ENCODE measurements at regions of chr7 and their contacts with region 1.

Region 1: DNA sequence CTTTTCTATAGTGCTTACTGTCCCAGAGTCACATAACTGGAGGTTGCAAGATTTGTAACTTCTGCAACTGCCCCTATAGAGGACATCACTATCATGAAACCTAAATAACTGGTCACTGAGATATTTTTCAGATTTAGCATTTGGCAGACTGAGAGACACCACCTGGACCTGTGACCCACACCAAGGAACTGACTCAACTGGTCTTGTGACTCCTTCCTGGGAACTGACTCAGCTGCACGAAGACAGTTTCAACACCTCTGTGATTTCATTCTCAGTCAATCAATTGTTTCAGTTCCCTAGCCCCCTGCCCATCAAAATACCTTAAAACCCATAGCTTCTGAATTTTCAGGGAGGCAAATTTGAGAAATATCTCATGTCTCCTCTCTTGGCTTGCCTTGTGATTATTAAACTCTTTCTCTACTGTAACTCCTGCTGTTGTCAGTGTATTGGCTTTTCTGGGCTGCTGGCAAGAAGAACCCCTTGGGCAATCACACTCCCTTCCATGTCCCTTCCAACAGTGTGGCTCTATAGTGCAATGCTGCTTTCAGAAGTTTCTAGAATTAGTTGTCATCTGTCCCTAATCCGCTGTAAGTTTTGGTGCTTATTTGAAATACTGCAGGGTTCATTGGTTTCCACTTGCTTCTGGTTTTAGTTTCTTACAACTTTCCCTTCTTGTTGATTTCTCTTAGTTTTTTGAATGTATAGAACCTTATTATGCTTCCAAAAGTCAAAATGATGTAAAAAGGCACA is 127.8 kb upstream of the ADCY1 start:
- DNase-seq: no peak
- H3K4me3 Mint-ChIP-seq: no peak overlapping the region
- H3K27ac Mint-ChIP-seq: no peak overlapping the region
- H3K4me1 Mint-ChIP-seq: peaks cover 15% of the 10 kb centered on the region
- H3K27me3 Mint-ChIP-seq: no peaks in the 10 kb centered on the region

Region 2: GRCh38 chr7:45402480-45403218 is 43.7 kb before region 1 on chr7:
- intact Hi-C with region 1: loop called (anchors 5 kb)
- DNase-seq: no peak
- H3K4me3 Mint-ChIP-seq: no peak overlapping the region
- H3K27ac Mint-ChIP-seq: peak overlapping the region; percentile 48
- H3K4me1 Mint-ChIP-seq: peaks cover 11% of the 10 kb centered on the region
- H3K27me3 Mint-ChIP-seq: no peaks in the 10 kb centered on the region

Region 3: GRCh38 chr7:45469103-45469502 is 22.7 kb after region 1 on chr7:
- intact Hi-C with region 1: no loop called
- DNase-seq: no peak
- H3K4me3 Mint-ChIP-seq: no peak overlapping the region
- H3K27ac Mint-ChIP-seq: no peak overlapping the region
- H3K4me1 Mint-ChIP-seq: no peaks in the 10 kb centered on the region
- H3K27me3 Mint-ChIP-seq: peaks cover 6% of the 10 kb centered on the region

Measured in activated T-helper 2 cell treated with anti-CD3 and anti-CD28 coated beads, Interferon-gamma antibody, Interleukin-2, Interleukin-4, amounts not matched to agents 10 μg/mL and 5 μg/mL and 100 μg/mL, durations not matched to agents 14 hours and 24 hours and 36 hours (primary cell).